ENCODE measurements at regions of chr4 and their contacts with region 1.

Region 1: GRCh38 chr4:130359542-130359941 is 1263.6 kb downstream of the C4orf33 start:
- DNase-seq: peak; percentile 48
- H3K4me3 ChIP-seq: no peak overlapping the region
- H3K27ac ChIP-seq: no peak overlapping the region
- H3K4me1 ChIP-seq: no peaks in the 10 kb centered on the region
- H3K27me3 ChIP-seq: no peaks in the 10 kb centered on the region
- CTCF ChIP-seq: peak; percentile 26
- POLR2A ChIP-seq: no peak

Region 2: GRCh38 chr4:130563185-130563888 is 203.8 kb after region 1 on chr4:
- CTCF ChIA-PET with region 1: interaction called, 6 read pairs
- POLR2A ChIA-PET with region 1: no interaction called
- dilution Hi-C with region 1: no loop called
- intact Hi-C with region 1: loop called (anchors 5 kb)
- DNase-seq: peak; percentile 73
- H3K4me3 ChIP-seq: peak overlapping the region; percentile 25 to 69 (median 28)
- H3K27ac ChIP-seq: no peak overlapping the region
- H3K4me1 ChIP-seq: peaks cover 2% of the 10 kb centered on the region
- H3K27me3 ChIP-seq: no peaks in the 10 kb centered on the region
- CTCF ChIP-seq: peak; percentile 53 to 80
- POLR2A ChIP-seq: no peak

Region 3: GRCh38 chr4:130747842-130748241 is 388.3 kb after region 1 on chr4:
- CTCF ChIA-PET with region 1: no interaction called
- POLR2A ChIA-PET with region 1: no interaction called
- dilution Hi-C with region 1: no loop called
- intact Hi-C with region 1: loop called (anchors 1 kb)
- DNase-seq: no peak
- H3K4me3 ChIP-seq: no peak overlapping the region
- H3K27ac ChIP-seq: no peak overlapping the region
- H3K4me1 ChIP-seq: no peaks in the 10 kb centered on the region
- H3K27me3 ChIP-seq: no peaks in the 10 kb centered on the region
- CTCF ChIP-seq: no peak
- POLR2A ChIP-seq: no peak

Region 4: GRCh38 chr4:130808492-130808891 is 448.9 kb after region 1 on chr4:
- CTCF ChIA-PET with region 1: interaction called, 44 read pairs
- POLR2A ChIA-PET with region 1: no interaction called
- dilution Hi-C with region 1: no loop called
- intact Hi-C with region 1: loop called (anchors 1 kb)
- DNase-seq: peak; percentile 41
- H3K4me3 ChIP-seq: no peak overlapping the region
- H3K27ac ChIP-seq: no peak overlapping the region
- H3K4me1 ChIP-seq: no peaks in the 10 kb centered on the region
- H3K27me3 ChIP-seq: no peaks in the 10 kb centered on the region
- CTCF ChIP-seq: peak; percentile 39 to 40
- POLR2A ChIP-seq: no peak

Region 5: GRCh38 chr4:132227151-132227856 is 1867.8 kb after region 1 on chr4:
- CTCF ChIA-PET with region 1: interaction called, 4 read pairs
- POLR2A ChIA-PET with region 1: no interaction called
- dilution Hi-C with region 1: no loop called
- intact Hi-C with region 1: loop called (anchors 5 kb)
- DNase-seq: peak; percentile 19
- H3K4me3 ChIP-seq: peak overlapping the region in 1 of 3 experiments; percentile 22
- H3K27ac ChIP-seq: no peak overlapping the region
- H3K4me1 ChIP-seq: no peaks in the 10 kb centered on the region
- H3K27me3 ChIP-seq: no peaks in the 10 kb centered on the region
- CTCF ChIP-seq: no peak
- POLR2A ChIP-seq: no peak

Measured in endothelial cell of umbilical vein (primary cell).